ENCODE measurements at regions of chr7 and their contacts with region 1.

Region 1: GRCh38 chr7:81186691-81187090 is 267.8 kb upstream of the SEMA3C start:
- DNase-seq: no peak
- ATAC-seq: peak in 3 of 8 donors; percentile 37 to 71 (median 38)
- H3K4me3 ChIP-seq: no peak overlapping the region
- H3K27ac ChIP-seq: no peak overlapping the region
- H3K4me1 ChIP-seq: peaks cover 0 to 23% (median 5%) of the 10 kb centered on the region in 9 donors
- H3K27me3 ChIP-seq: no peaks in the 10 kb centered on the region
- CTCF ChIP-seq: no peak

Region 2: DNA sequence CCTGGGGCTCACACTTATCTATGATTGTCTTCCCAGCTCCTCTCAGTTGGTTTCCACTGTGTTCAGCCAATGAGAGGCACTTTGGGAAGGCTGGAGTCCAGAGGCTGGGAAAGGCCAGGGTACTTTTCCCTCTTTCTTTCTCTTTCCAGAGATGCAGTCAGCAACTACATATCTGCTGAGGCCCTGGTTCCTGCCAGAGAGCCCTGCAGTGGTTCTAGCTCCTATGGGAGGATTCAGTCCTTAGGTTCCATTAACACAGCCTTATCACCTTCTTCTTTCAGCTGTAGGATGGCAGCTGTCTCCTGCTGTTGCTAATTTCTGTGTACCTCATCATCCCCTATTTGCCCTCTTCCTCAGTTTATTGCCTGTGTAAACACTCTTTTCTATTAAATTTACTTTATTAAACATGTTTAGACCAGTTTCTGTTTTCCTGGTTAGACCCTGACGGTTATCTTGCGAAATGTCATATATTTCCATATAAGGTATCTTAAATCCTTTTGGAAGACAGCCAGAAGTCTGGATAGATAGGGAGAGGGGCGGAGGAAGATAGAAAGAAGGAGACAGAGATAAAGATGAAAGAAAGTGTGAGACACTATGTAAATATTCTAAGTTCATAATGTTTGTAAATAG is 482.9 kb after region 1 on chr7:
- intact Hi-C with region 1: loop called in 1 of 10 experiments (anchors 5 kb)
- DNase-seq: no peak
- ATAC-seq: no peak
- H3K4me3 ChIP-seq: no peak overlapping the region
- H3K27ac ChIP-seq: no peak overlapping the region
- H3K4me1 ChIP-seq: peaks cover 0 to 6% (median 0%) of the 10 kb centered on the region in 9 donors
- H3K27me3 ChIP-seq: no peaks in the 10 kb centered on the region
- CTCF ChIP-seq: no peak

Measured in heart right ventricle (tissue), 16 donors.